K562 (cell line): ENCODE measurements at regions of chr1 and their contacts with region 1.

Region 1: GRCh38 chr1:70909262-70909822 is 138.3 kb downstream of the PTGER3 start:
- DNase-seq: peak in 2 of 4 experiments; percentile 27 to 53
- ATAC-seq: peak; percentile 80
- H3K4me3 ChIP-seq: no peak overlapping the region
- H3K27ac ChIP-seq: peak overlapping the region; percentile 64
- H3K4me1 ChIP-seq: peaks cover 0 to 17% of the 10 kb centered on the region in 2 experiments; a peak in 3 of 5 replicates
- H3K27me3 ChIP-seq: no peaks in the 10 kb centered on the region
- CTCF ChIP-seq: no peak
- EP300 ChIP-seq: peak; percentile 70
- POLR2A ChIP-seq: no peak
- RAD21 ChIP-seq: peak in 1 of 2 experiments; percentile 18; a peak in 1 of 4 replicates

Region 2: DNA sequence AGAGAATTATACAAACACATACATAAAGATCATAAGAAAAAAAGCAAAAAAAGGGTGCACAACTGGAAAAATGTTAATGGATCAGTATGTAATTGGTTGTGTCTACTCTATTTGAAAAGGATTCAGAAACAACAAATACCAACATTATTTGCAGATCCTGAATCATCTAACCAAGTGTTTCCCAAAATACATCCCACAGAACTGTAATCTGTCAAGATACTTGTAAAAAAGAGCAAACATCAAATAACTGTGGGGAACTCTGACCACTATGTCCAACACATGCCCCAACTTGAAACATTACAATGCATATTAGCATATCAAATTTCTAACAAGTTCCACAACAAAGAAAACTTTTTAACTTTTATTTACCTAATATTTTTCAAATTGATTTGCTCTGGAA is 577.4 kb before region 1 on chr1:
- CTCF ChIA-PET with region 1: no interaction called
- POLR2A ChIA-PET with region 1: no interaction called
- in situ Hi-C with region 1: no loop called
- intact Hi-C with region 1: no loop called
- DNase-seq: no peak
- ATAC-seq: no peak
- H3K4me3 ChIP-seq: no peak overlapping the region
- H3K27ac ChIP-seq: no peak overlapping the region
- H3K4me1 ChIP-seq: no peaks in the 10 kb centered on the region
- H3K27me3 ChIP-seq: no peaks in the 10 kb centered on the region
- CTCF ChIP-seq: no peak
- EP300 ChIP-seq: no peak
- POLR2A ChIP-seq: no peak
- RAD21 ChIP-seq: no peak

Region 3: DNA sequence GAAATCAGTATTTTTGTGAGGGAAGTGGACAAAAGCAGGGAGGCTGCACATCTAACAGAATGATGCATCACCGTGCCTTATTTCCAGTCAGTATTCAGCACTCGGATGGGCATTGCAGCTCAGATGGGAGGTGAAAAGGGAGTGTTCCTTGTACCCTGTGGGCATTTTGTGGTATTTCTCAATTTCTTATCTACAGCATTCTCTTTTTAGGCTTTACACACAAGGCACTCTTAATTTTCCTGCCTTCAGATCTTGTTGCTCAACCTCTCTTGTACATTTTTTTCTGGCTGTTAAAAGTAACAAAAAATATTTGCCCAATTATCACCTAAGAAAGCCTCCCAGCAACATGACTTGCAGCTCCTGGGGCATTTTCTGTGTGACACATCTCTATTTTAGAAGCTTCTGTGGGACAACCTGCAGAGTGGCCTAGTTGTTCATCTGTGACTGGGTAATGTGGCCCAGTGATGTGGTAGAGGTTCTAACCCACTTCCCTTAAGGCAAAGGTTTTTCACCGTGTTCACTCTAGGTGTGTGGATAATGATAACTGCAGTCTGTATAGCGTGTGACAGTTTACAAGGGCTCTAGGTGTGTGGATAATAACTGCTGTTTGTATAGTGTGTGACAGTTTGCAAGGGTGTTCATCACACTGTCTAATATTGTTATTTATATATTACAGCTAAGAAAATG is 119.0 kb before region 1 on chr1:
- CTCF ChIA-PET with region 1: no interaction called
- POLR2A ChIA-PET with region 1: no interaction called
- in situ Hi-C with region 1: no loop called
- intact Hi-C with region 1: no loop called
- DNase-seq: no peak
- ATAC-seq: 0 out of 3 replicates have a peak, but pooled peaks have one; percentile 39
- H3K4me3 ChIP-seq: no peak overlapping the region
- H3K27ac ChIP-seq: no peak overlapping the region
- H3K4me1 ChIP-seq: 0 out of 5 replicates have a peak, but pooled peaks cover 0 to 2% of the 10 kb centered on the region in 2 experiments
- H3K27me3 ChIP-seq: no peaks in the 10 kb centered on the region
- CTCF ChIP-seq: no peak
- EP300 ChIP-seq: no peak
- POLR2A ChIP-seq: no peak
- RAD21 ChIP-seq: no peak

Region 4: DNA sequence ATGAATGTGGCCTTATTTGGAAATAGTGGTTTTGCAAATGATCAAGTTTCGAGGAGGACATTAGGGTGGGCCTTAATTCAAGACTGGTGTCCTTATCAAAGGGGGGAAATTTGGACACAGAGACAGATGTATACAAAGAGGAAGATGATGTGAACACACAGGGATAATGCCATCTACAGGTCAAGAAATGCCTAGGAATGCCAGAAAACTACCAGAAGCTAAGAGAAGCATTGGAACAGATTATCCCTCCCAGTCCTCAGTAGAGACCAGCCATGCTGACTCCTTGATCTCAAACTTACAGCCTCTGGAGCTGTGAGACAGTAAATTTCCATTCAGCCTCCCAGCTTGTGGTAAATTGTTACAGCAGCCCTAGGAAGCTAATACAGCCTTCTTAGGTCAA is 13.1 kb before region 1 on chr1:
- CTCF ChIA-PET with region 1: no interaction called
- POLR2A ChIA-PET with region 1: interaction called, 16 read pairs
- in situ Hi-C with region 1: no loop called
- intact Hi-C with region 1: no loop called
- DNase-seq: no peak
- ATAC-seq: peak; percentile 80
- H3K4me3 ChIP-seq: no peak overlapping the region
- H3K27ac ChIP-seq: no peak overlapping the region
- H3K4me1 ChIP-seq: peaks cover 0 to 24% of the 10 kb centered on the region in 2 experiments; a peak in 3 of 5 replicates
- H3K27me3 ChIP-seq: no peaks in the 10 kb centered on the region
- CTCF ChIP-seq: peak; percentile 30 to 52 (median 36); a peak in 4 of 6 replicates
- EP300 ChIP-seq: no peak
- POLR2A ChIP-seq: no peak
- RAD21 ChIP-seq: peak; percentile 30 to 68; a peak in 3 of 4 replicates